ENCODE measurements at regions of chr15 and their contacts with region 1.

Region 1: DNA sequence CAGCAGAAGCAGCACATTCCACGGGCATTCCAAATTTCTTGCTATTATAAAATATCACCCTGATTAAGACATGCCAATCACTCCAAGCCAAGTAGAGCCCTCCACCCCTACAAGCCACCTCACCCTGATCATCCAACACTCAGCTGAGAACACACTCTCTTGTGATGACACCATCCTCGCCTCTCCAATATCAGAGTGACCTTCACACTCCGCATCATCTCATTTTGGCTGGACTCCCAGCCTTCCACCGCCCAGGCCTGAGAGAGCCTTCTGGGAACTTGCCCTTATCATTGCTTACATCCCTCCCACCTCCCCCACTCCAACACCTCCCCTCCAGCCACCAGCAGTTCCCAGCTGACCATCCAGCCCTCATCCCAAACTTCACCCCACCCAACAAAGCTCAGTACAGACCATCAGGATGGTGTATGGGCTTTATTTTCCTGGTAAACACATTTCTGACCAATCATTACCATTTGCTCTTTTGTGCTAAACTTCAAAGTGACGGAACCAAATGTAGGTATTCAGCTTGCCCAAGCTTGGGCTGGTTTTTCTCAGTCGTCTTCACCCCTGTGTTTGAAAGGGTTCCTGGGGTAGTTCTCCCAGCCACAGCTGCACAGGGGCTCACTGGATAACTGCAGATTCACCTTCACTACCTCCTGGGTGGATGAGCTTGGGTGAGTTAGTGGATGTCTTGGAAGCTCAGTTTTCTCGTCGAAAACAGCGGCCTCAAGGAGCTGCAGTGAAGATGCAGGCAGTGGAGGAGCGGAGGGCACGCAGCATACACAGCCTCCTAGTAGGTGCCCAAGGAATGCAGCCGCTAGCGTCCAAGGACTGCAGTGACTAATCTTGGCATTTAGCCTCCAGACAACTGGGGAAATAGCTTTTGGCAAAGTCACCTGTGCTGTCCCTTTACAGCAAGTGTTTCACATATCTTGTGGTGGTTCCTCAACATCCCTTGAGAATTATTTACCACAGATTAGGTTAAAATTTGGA is 115.1 kb downstream of the LIPC start:
- DNase-seq: peak; percentile 88 to 97
- H3K4me3 ChIP-seq: peak overlapping the region; percentile 43; the same call in 1 of the 2 replicates
- H3K27ac ChIP-seq: peak overlapping the region; percentile 97
- H3K4me1 ChIP-seq: peaks cover 50% of the 10 kb centered on the region
- H3K27me3 ChIP-seq: no peaks in the 10 kb centered on the region
- CTCF ChIP-seq: no peak

Region 2: DNA sequence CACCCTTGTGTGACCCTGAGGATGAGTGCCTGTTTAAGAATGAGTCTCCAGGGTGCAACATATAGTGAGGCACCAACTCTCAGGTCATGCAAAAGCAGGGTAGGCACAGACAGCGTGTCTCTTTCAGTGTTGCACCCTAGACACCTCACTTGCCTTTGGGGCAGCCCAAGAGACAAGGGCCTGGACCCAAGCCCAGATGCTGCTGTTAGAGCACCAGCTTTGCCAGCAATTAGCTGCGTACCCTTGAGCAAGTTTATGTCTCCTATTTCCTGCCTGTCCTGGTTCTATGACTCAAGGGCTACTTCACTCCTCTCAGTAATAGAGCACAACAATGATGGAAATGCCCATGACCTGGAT is 286.0 kb before region 1 on chr15:
- CTCF ChIA-PET with region 1: no interaction called
- POLR2A ChIA-PET with region 1: interaction called, 6 read pairs
- intact Hi-C with region 1: loop called (anchors 2 kb)
- DNase-seq: peak; percentile 48 to 83
- H3K4me3 ChIP-seq: 0 out of 2 replicates have a peak overlapping the region, but pooled peaks have one; percentile 27
- H3K27ac ChIP-seq: peak overlapping the region; percentile 98
- H3K4me1 ChIP-seq: peaks cover 46% of the 10 kb centered on the region
- H3K27me3 ChIP-seq: no peaks in the 10 kb centered on the region
- CTCF ChIP-seq: no peak

Region 3: DNA sequence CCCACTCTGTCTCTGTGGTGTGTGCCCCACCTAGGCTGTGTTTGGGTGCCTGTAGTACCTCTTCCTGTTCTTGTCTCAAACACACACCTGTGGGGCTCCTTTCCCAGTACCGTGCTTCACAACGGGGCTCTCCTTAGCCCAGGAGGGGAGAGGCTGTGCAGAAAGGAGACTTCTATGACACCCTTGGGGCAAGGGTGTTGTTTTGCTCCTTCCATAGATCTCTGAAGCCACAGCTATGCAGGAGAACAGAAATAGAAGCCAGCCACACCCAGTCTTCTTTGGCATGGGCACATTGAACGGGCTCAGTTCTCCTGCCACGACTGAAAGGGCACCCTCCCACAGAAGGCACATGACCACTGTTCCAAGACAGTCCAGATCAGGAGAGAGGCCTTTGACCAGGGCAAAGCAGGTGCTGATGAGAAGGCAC is 40.9 kb before region 1 on chr15:
- CTCF ChIA-PET with region 1: no interaction called
- POLR2A ChIA-PET with region 1: interaction called, 24 read pairs
- intact Hi-C with region 1: loop called (anchors 1 kb)
- DNase-seq: peak; percentile 43 to 75
- H3K4me3 ChIP-seq: no peak overlapping the region
- H3K27ac ChIP-seq: 0 out of 2 replicates have a peak overlapping the region, but pooled peaks have one; percentile 40
- H3K4me1 ChIP-seq: peaks cover 17% of the 10 kb centered on the region
- H3K27me3 ChIP-seq: no peaks in the 10 kb centered on the region
- CTCF ChIP-seq: no peak

Region 4: DNA sequence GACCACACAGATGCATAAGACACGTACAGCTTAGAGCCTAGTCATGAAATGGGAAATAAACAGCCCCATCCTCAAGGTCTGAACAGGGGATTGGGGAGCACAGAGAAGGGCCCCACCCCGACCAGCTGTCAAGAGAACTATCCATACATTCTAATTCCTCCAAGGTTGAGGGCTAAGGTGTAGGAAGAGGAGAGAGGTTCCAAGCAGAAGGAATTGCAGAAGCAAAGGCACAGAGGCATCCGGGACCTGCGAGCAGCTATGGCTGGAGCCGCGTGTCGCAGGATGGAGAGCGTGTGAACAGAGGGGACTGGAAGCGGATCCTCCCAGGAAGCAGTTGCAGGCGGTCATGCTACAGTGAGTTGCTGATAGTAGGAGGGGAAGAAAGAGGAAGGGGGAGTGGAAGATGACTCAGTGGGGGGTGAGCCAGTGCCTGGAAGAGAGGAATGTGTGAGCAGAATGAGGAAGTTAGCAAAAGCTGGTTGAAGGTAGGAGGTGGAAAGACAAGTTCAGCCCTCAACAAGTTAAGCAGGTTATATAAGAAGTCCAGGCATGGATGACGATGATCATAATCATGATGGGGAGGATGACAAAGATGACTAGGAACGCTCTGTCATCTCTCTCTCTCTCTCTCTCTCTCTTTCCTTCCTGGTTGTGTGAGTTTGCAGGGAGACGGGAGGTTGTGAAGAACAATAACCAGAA is 25.5 kb before region 1 on chr15:
- CTCF ChIA-PET with region 1: no interaction called
- POLR2A ChIA-PET with region 1: interaction called, 7 read pairs
- intact Hi-C with region 1: loop called (anchors 1 kb)
- DNase-seq: peak; percentile 89 to 98
- H3K4me3 ChIP-seq: peak overlapping the region; percentile 49; the same call in 1 of the 2 replicates
- H3K27ac ChIP-seq: peak overlapping the region; percentile 97
- H3K4me1 ChIP-seq: peaks cover 50% of the 10 kb centered on the region
- H3K27me3 ChIP-seq: no peaks in the 10 kb centered on the region
- CTCF ChIP-seq: no peak

Region 5: GRCh38 chr15:58590926-58591325 is 44.0 kb after region 1 on chr15:
- CTCF ChIA-PET with region 1: no interaction called
- POLR2A ChIA-PET with region 1: interaction called, 6 read pairs
- intact Hi-C with region 1: loop called (anchors 2 kb)
- DNase-seq: no peak
- H3K4me3 ChIP-seq: no peak overlapping the region
- H3K27ac ChIP-seq: no peak overlapping the region
- H3K4me1 ChIP-seq: no peaks in the 10 kb centered on the region
- H3K27me3 ChIP-seq: no peaks in the 10 kb centered on the region
- CTCF ChIP-seq: no peak

Region 6: DNA sequence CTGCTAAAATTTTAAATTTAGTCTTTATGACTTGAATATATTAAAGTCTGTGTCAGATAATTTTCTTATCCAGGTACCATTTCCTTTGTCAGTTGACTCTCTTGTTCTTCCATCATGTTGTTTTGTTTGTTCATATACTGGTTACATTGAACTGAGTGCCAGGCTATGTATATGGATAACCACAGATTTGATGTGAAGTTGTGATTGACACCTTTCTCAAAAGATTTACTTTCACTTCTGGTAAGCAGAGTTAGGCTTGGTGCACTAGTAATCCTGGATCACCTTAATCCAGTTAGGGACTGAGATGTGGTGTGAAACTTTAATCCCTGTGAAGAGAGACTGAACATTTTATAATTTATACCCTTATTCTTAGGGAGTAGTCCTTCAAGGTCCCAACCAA is 103.2 kb after region 1 on chr15:
- CTCF ChIA-PET with region 1: no interaction called
- POLR2A ChIA-PET with region 1: no interaction called
- intact Hi-C with region 1: no loop called
- DNase-seq: no peak
- H3K4me3 ChIP-seq: no peak overlapping the region
- H3K27ac ChIP-seq: no peak overlapping the region
- H3K4me1 ChIP-seq: no peaks in the 10 kb centered on the region
- H3K27me3 ChIP-seq: no peaks in the 10 kb centered on the region
- CTCF ChIP-seq: no peak

Region 7: DNA sequence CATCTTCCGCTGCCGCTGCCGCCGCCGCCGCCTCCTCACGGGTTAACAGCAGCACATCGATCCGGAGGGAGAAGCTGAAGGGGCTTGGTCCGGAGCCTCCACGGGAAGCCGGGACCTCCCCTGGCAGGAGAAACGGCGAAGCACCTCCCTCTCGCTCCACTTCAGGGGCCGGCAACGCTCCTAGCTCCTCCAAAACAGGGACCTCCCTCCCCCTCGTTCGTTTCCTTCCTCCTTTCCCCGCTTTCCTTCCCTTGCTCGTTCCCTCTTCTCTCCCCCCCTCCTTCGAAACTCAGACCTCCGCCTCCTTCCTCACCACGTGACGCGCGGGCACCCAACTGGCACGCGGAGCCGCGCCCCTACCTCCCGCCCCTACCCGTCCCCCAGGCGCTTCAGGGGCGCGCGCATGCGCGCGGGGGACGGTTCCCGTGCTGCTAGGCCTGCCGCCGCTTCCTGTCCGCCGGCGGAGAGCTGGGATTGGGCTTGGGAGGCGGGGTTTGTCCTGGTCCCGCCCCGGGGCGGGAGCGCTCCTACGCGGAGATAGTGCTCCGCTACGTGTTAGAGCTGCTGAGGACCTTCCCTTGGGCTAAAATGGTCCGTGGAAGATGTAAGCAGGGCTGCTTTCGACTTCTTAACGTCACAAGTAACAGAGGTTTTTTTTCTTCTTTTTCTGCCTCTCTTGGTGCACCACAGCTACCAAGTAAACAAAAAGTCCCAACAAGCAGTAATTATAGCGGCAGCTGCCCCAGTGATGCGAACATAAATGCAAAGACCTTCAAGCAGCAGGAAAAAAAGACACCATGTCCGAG is 202.8 kb after region 1 on chr15 and contains the start of gene ADAM10:
- CTCF ChIA-PET with region 1: interaction called, 11 read pairs
- POLR2A ChIA-PET with region 1: no interaction called
- intact Hi-C with region 1: no loop called
- DNase-seq: peak; percentile 89 to 98
- H3K4me3 ChIP-seq: peak within 1 kb of the TSS; percentile 97
- H3K27ac ChIP-seq: peak within 1 kb of the TSS; percentile 79
- H3K4me1 ChIP-seq: peaks cover 20% of the 10 kb centered on the region
- H3K27me3 ChIP-seq: no peaks in the 10 kb centered on the region
- CTCF ChIP-seq: no peak
- total RNA-seq, gene ADAM10: 160 and 239 TPM in 2 replicates

Region 8: GRCh38 chr15:58793862-58794261 is 246.9 kb after region 1 on chr15:
- CTCF ChIA-PET with region 1: no interaction called
- POLR2A ChIA-PET with region 1: interaction called, 27 read pairs
- intact Hi-C with region 1: no loop called
- DNase-seq: peak in 1 of 2 experiments; percentile 81
- H3K4me3 ChIP-seq: no peak overlapping the region
- H3K27ac ChIP-seq: peak overlapping the region; percentile 53; the same call in 1 of the 2 replicates
- H3K4me1 ChIP-seq: no peaks in the 10 kb centered on the region
- H3K27me3 ChIP-seq: no peaks in the 10 kb centered on the region
- CTCF ChIP-seq: no peak

Measured in PC-9 (cell line).